CD8-positive, alpha-beta T cell (primary cell): ENCODE measurements at regions of chr10 and their contacts with region 1.

Region 1: GRCh38 chr10:101830322-101831168 is 12.3 kb upstream of the OGA start:
- DNase-seq: peak; percentile 84 to 98 (median 93)
- ATAC-seq: peak; percentile 74
- H3K4me3 ChIP-seq: peak overlapping the region; percentile 49 to 51
- H3K4me3 Mint-ChIP-seq: peak overlapping the region; percentile 87
- H3K27ac ChIP-seq: peak overlapping the region; percentile 66 to 84
- H3K27ac Mint-ChIP-seq: peak overlapping the region; percentile 97
- H3K4me1 ChIP-seq: peaks cover 40% of the 10 kb centered on the region
- H3K4me1 Mint-ChIP-seq: peaks cover 47% of the 10 kb centered on the region
- H3K27me3 ChIP-seq: no peaks in the 10 kb centered on the region
- H3K27me3 Mint-ChIP-seq: no peaks in the 10 kb centered on the region
- CTCF ChIP-seq: no peak

Region 2: GRCh38 chr10:101693978-101694673 is 136.4 kb before region 1 on chr10:
- CTCF ChIA-PET with region 1: no interaction called
- POLR2A ChIA-PET with region 1: no interaction called
- intact Hi-C with region 1: loop called in 1 of 2 experiments (anchors 5 kb)
- DNase-seq: peak; percentile 42 to 83 (median 70)
- ATAC-seq: peak; percentile 66
- H3K4me3 ChIP-seq: peak overlapping the region; percentile 85 to 88
- H3K4me3 Mint-ChIP-seq: peak overlapping the region; percentile 97
- H3K27ac ChIP-seq: peak overlapping the region; percentile 97 to 99
- H3K27ac Mint-ChIP-seq: peak overlapping the region; percentile 99
- H3K4me1 ChIP-seq: peaks cover 36% of the 10 kb centered on the region
- H3K4me1 Mint-ChIP-seq: peaks cover 48% of the 10 kb centered on the region
- H3K27me3 ChIP-seq: no peaks in the 10 kb centered on the region
- H3K27me3 Mint-ChIP-seq: no peaks in the 10 kb centered on the region
- CTCF ChIP-seq: no peak

Region 3: GRCh38 chr10:101759309-101760247 is 71.0 kb before region 1 on chr10:
- CTCF ChIA-PET with region 1: no interaction called
- POLR2A ChIA-PET with region 1: no interaction called
- intact Hi-C with region 1: no loop called
- DNase-seq: no peak
- ATAC-seq: no peak
- H3K4me3 ChIP-seq: no peak overlapping the region
- H3K4me3 Mint-ChIP-seq: no peak overlapping the region
- H3K27ac ChIP-seq: no peak overlapping the region
- H3K27ac Mint-ChIP-seq: no peak overlapping the region
- H3K4me1 ChIP-seq: no peaks in the 10 kb centered on the region
- H3K4me1 Mint-ChIP-seq: no peaks in the 10 kb centered on the region
- H3K27me3 ChIP-seq: peaks cover 0 to 2% of the 10 kb centered on the region in 2 experiments
- H3K27me3 Mint-ChIP-seq: peaks cover 10% of the 10 kb centered on the region
- CTCF ChIP-seq: no peak

Region 4: GRCh38 chr10:101840741-101841453 is 10.4 kb after region 1 on chr10:
- CTCF ChIA-PET with region 1: interaction called, 43 read pairs
- POLR2A ChIA-PET with region 1: interaction called, 4 read pairs
- intact Hi-C with region 1: loop called in 1 of 2 experiments (anchors 1 kb)
- DNase-seq: peak; percentile 39 to 82 (median 72)
- ATAC-seq: peak; percentile 44
- H3K4me3 ChIP-seq: peak overlapping the region; percentile 47 to 48
- H3K4me3 Mint-ChIP-seq: peak overlapping the region; percentile 84
- H3K27ac ChIP-seq: no peak overlapping the region
- H3K27ac Mint-ChIP-seq: no peak overlapping the region
- H3K4me1 ChIP-seq: peaks cover 38% of the 10 kb centered on the region
- H3K4me1 Mint-ChIP-seq: peaks cover 48% of the 10 kb centered on the region
- H3K27me3 ChIP-seq: no peaks in the 10 kb centered on the region
- H3K27me3 Mint-ChIP-seq: peaks cover 8% of the 10 kb centered on the region
- CTCF ChIP-seq: peak; percentile 84

Region 5: GRCh38 chr10:101858723-101859500 is 28.4 kb after region 1 on chr10:
- CTCF ChIA-PET with region 1: interaction called, 12 read pairs
- POLR2A ChIA-PET with region 1: no interaction called
- intact Hi-C with region 1: no loop called
- DNase-seq: no peak
- ATAC-seq: no peak
- H3K4me3 ChIP-seq: peak overlapping the region in 1 of 2 experiments; percentile 10
- H3K4me3 Mint-ChIP-seq: peak overlapping the region; percentile 38
- H3K27ac ChIP-seq: peak overlapping the region in 1 of 2 experiments; percentile 52
- H3K27ac Mint-ChIP-seq: no peak overlapping the region
- H3K4me1 ChIP-seq: no peaks in the 10 kb centered on the region
- H3K4me1 Mint-ChIP-seq: peaks cover 4% of the 10 kb centered on the region
- H3K27me3 ChIP-seq: no peaks in the 10 kb centered on the region
- H3K27me3 Mint-ChIP-seq: no peaks in the 10 kb centered on the region
- CTCF ChIP-seq: no peak

Region 6: DNA sequence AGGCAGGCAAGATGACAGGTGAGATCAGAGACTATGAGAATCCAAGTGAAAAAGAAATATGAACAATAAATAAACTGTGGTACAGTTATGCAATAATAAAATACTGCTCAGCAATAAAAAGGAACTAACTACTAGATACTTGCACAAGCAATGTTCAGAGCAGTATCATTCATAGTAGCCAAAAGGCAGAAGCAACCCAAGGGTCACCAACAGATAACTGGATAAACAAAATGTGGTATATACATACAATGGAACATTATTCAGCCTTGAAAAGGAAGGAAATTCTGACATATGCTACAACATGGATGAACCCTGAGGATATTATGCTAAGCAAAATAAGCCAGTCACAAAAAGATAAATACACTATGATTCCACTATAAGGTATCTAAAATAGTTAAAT is 90.0 kb after region 1 on chr10:
- CTCF ChIA-PET with region 1: no interaction called
- POLR2A ChIA-PET with region 1: no interaction called
- intact Hi-C with region 1: no loop called
- DNase-seq: no peak
- ATAC-seq: no peak
- H3K4me3 ChIP-seq: no peak overlapping the region
- H3K4me3 Mint-ChIP-seq: no peak overlapping the region
- H3K27ac ChIP-seq: no peak overlapping the region
- H3K27ac Mint-ChIP-seq: no peak overlapping the region
- H3K4me1 ChIP-seq: no peaks in the 10 kb centered on the region
- H3K4me1 Mint-ChIP-seq: no peaks in the 10 kb centered on the region
- H3K27me3 ChIP-seq: no peaks in the 10 kb centered on the region
- H3K27me3 Mint-ChIP-seq: no peaks in the 10 kb centered on the region
- CTCF ChIP-seq: no peak

Region 7: GRCh38 chr10:102114861-102115618 is 284.5 kb after region 1 on chr10:
- CTCF ChIA-PET with region 1: no interaction called
- POLR2A ChIA-PET with region 1: no interaction called
- intact Hi-C with region 1: loop called in 1 of 2 experiments (anchors 2 kb)
- DNase-seq: peak; percentile 62 to 90 (median 84)
- ATAC-seq: peak; percentile 69
- H3K4me3 ChIP-seq: peak overlapping the region; percentile 57 to 75
- H3K4me3 Mint-ChIP-seq: peak overlapping the region; percentile 91
- H3K27ac ChIP-seq: peak overlapping the region; percentile 56 to 97
- H3K27ac Mint-ChIP-seq: peak overlapping the region; percentile 93
- H3K4me1 ChIP-seq: peaks cover 63% of the 10 kb centered on the region
- H3K4me1 Mint-ChIP-seq: peaks cover 71% of the 10 kb centered on the region
- H3K27me3 ChIP-seq: no peaks in the 10 kb centered on the region
- H3K27me3 Mint-ChIP-seq: no peaks in the 10 kb centered on the region
- CTCF ChIP-seq: no peak